B cell (primary cell): ENCODE measurements at regions of chr5 and their contacts with region 1.

Region 1: DNA sequence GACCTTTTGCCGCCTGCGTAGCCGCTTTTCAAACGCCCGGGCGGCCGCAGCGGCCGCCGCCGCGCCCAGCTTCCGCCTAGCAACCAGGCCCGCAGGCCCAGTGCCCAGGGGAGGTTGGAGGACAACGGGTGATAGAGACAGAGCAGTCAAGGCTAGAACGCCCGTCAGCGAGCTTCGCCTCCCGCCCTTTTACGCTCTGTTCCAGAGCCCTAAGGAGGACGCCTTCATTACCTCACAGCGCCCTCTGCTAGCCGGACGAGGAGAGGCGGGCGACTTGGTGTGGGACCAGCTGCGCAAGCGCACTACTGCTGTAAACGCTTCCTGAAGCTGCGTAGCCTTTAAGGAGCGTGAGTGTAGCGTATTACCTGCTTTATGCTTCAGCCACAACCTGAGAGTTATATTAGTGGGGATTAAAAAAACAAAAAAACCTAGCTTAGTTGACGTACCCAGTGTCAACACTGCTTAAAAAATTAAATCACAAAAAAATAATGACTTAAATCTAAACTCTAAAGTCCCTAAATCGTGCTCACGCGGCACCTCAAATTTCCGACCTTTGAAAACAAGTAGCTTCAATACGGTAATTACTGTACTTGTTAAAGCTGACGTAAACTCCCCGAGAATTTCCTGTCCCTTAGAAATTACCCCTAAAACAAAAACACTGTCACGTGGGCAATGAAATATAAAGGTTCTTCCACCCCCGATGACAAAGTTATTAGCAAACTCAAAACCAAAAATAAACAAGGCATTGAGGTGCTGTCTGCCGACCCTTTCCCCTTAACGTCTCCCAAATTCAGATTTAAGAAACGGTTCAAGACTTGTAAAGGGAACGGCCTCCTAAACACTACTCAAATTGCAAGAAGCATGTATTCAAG is at the start of gene CEP120:
- DNase-seq: peak; percentile 99
- ATAC-seq: peak; percentile 97
- H3K4me3 ChIP-seq: peak within 1 kb of the TSS; percentile 51 to 90 (median 89)
- H3K4me3 Mint-ChIP-seq: no peak within 1 kb of the TSS
- H3K27ac ChIP-seq: peak within 1 kb of the TSS; percentile 96 to 99
- H3K27ac Mint-ChIP-seq: no peak within 1 kb of the TSS
- H3K4me1 ChIP-seq: peaks cover 32 to 34% of the 10 kb centered on the region in 2 donors
- H3K4me1 Mint-ChIP-seq: peaks cover 22% of the 10 kb centered on the region
- H3K27me3 ChIP-seq: no peaks in the 10 kb centered on the region
- H3K27me3 Mint-ChIP-seq: no peaks in the 10 kb centered on the region
- CTCF ChIP-seq: peak; percentile 87
- total RNA-seq, gene CEP120: 89.7 and 97.9 TPM in 2 replicates

Region 2: DNA sequence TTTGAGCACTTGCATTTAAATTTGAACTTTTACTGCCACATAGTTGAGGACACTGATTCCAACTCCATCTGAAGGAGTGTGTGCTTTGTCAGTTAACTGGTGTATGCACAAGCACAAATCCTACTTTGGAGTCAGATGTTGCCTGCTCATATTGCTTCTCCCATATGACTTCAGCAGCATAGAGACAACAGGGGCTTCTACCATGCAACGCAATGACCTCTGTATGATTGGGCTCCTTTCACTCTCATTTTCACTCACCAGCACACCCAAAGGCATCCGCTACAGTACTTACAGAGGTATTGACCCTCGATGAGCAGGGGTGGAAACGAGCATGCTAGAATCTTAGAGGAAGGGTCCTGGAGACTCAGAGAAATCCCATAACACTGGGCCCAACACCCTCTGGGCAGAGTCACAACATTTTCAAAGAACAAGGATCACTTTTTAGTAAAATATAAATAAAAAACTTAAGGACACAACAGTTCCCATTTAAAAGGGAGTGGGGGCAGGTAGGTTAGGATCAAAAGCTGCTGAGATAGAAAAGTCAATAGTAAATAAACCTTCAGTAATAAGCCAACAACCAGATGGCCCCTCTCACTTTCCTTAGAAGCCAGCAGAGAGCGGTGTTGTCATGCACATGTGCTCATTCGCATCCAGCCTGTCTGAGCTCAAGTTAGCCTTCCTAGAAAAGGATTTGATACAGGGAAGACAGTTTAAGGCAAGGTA is 907.6 kb before region 1 on chr5:
- CTCF ChIA-PET with region 1: interaction called, 6 read pairs
- POLR2A ChIA-PET with region 1: no interaction called
- intact Hi-C with region 1: loop called (anchors 2 kb)
- DNase-seq: peak; percentile 77
- ATAC-seq: peak; percentile 73
- H3K4me3 ChIP-seq: no peak overlapping the region
- H3K4me3 Mint-ChIP-seq: no peak overlapping the region
- H3K27ac ChIP-seq: no peak overlapping the region
- H3K27ac Mint-ChIP-seq: no peak overlapping the region
- H3K4me1 ChIP-seq: peaks cover 0 to 3% of the 10 kb centered on the region in 2 donors
- H3K4me1 Mint-ChIP-seq: peaks cover 4% of the 10 kb centered on the region
- H3K27me3 ChIP-seq: peaks cover 0 to 4% (median 0%) of the 10 kb centered on the region in 4 experiments
- H3K27me3 Mint-ChIP-seq: peaks cover 4% of the 10 kb centered on the region
- CTCF ChIP-seq: peak; percentile 89

Region 3: DNA sequence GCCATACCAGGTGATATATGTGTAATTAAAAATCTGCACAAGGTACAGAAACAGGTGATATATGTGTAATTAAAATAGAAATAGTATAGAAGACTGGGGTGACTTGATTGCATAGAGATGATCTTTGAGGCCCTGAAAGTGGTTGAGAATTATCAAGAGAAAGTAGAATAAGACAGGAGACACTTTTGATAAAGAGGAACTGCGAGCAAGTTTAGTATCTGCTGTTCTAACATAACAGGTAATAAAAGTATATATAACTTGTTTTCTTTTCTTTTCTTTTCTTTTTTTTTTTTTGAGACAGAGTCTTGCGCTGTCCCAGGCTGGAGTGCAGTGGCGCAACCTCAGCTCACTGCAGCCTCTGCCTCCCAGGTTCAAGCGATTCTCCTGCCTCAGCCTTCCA is 643.2 kb before region 1 on chr5:
- CTCF ChIA-PET with region 1: interaction called, 4 read pairs
- POLR2A ChIA-PET with region 1: no interaction called
- intact Hi-C with region 1: loop called (anchors 1 kb)
- DNase-seq: peak; percentile 42
- ATAC-seq: peak; percentile 35
- H3K4me3 ChIP-seq: peak overlapping the region in 4 of 5 experiments; percentile 25 to 95 (median 34)
- H3K4me3 Mint-ChIP-seq: peak overlapping the region; percentile 74
- H3K27ac ChIP-seq: peak overlapping the region; percentile 57 to 100
- H3K27ac Mint-ChIP-seq: peak overlapping the region; percentile 82
- H3K4me1 ChIP-seq: peaks cover 44 to 58% of the 10 kb centered on the region in 2 donors
- H3K4me1 Mint-ChIP-seq: peaks cover 63% of the 10 kb centered on the region
- H3K27me3 ChIP-seq: no peaks in the 10 kb centered on the region
- H3K27me3 Mint-ChIP-seq: no peaks in the 10 kb centered on the region
- CTCF ChIP-seq: no peak

Region 4: GRCh38 chr5:122885891-122886290 is 537.6 kb before region 1 on chr5:
- CTCF ChIA-PET with region 1: no interaction called
- POLR2A ChIA-PET with region 1: no interaction called
- intact Hi-C with region 1: no loop called
- DNase-seq: no peak
- ATAC-seq: no peak
- H3K4me3 ChIP-seq: no peak overlapping the region
- H3K4me3 Mint-ChIP-seq: no peak overlapping the region
- H3K27ac ChIP-seq: no peak overlapping the region
- H3K27ac Mint-ChIP-seq: no peak overlapping the region
- H3K4me1 ChIP-seq: no peaks in the 10 kb centered on the region
- H3K4me1 Mint-ChIP-seq: no peaks in the 10 kb centered on the region
- H3K27me3 ChIP-seq: no peaks in the 10 kb centered on the region
- H3K27me3 Mint-ChIP-seq: no peaks in the 10 kb centered on the region
- CTCF ChIP-seq: no peak

Region 5: DNA sequence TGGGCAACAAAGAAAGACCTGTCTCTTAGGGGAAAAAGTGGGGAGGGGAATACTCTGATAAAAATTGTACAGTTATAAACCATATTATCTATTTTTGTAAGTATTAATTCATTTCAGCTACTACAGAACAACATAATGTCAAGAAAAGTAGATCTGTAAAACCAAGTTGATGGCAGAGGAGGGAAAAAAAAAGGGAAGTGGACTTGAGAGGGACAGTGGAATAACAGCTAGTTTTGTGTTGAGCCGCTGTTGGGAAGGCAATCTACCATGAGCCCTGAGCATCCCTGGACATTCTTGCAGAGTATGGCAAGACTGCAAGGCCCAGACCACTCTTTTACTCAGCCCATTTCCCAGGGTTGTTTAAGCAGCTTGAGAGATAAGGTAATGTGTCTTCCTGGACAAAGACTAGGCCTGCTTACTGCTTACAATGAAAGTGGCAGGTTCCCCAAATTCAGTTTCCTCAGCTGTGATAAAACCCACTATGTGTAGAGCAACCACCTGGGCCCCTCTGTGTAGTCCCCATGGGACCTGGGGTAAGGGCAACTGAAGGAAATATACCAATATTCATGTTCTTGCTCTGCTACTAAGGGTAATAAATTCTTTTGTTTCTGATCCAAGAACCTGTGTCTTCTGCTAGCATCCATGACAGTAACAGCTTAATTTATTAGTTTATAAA is 25.3 kb before region 1 on chr5:
- CTCF ChIA-PET with region 1: interaction called, 11 read pairs
- POLR2A ChIA-PET with region 1: interaction called, 12 read pairs
- intact Hi-C with region 1: loop called (anchors 1 kb)
- DNase-seq: peak; percentile 84
- ATAC-seq: peak; percentile 99
- H3K4me3 ChIP-seq: no peak overlapping the region
- H3K4me3 Mint-ChIP-seq: peak overlapping the region; percentile 16
- H3K27ac ChIP-seq: peak overlapping the region; percentile 73
- H3K27ac Mint-ChIP-seq: peak overlapping the region; percentile 91
- H3K4me1 ChIP-seq: peaks cover 18 to 27% of the 10 kb centered on the region in 2 donors
- H3K4me1 Mint-ChIP-seq: peaks cover 30% of the 10 kb centered on the region
- H3K27me3 ChIP-seq: no peaks in the 10 kb centered on the region
- H3K27me3 Mint-ChIP-seq: no peaks in the 10 kb centered on the region
- CTCF ChIP-seq: no peak

Region 6: GRCh38 chr5:123511648-123512605 is 88.4 kb after region 1 on chr5 and contains the start of gene CSNK1G3:
- CTCF ChIA-PET with region 1: interaction called, 37 read pairs
- POLR2A ChIA-PET with region 1: interaction called, 40 read pairs
- intact Hi-C with region 1: loop called (anchors 1 kb)
- DNase-seq: peak; percentile 95
- ATAC-seq: peak; percentile 89
- H3K4me3 ChIP-seq: peak within 1 kb of the TSS; percentile 86 to 92 (median 89)
- H3K4me3 Mint-ChIP-seq: peak within 1 kb of the TSS; percentile 100
- H3K27ac ChIP-seq: peak within 1 kb of the TSS; percentile 89 to 90
- H3K27ac Mint-ChIP-seq: peak within 1 kb of the TSS; percentile 99
- H3K4me1 ChIP-seq: peaks cover 33 to 39% of the 10 kb centered on the region in 2 donors
- H3K4me1 Mint-ChIP-seq: peaks cover 41% of the 10 kb centered on the region
- H3K27me3 ChIP-seq: no peaks in the 10 kb centered on the region
- H3K27me3 Mint-ChIP-seq: peaks cover 3% of the 10 kb centered on the region
- CTCF ChIP-seq: no peak
- total RNA-seq, gene CSNK1G3: 140 and 148 TPM in 2 replicates

Region 7: DNA sequence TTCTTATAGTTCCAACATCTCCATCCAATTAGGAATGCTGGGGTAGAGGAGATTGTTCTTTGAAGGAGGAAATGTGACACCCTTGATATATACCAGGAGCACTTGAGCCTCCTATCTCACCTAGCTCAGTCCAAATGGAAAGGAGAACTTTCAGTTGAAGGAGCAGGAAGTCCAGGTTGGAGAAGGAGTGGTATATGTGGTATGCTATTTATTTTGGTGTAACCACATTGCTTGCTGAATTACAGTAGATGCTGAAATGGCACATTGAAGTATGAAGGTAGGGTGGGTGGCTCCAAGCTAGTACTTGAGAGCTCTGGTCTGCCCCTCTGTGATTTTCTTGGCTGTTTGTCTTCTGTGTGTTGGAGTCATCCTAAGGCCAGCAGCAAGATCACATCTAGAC is 94.6 kb after region 1 on chr5:
- CTCF ChIA-PET with region 1: interaction called, 37 read pairs
- POLR2A ChIA-PET with region 1: interaction called, 40 read pairs
- intact Hi-C with region 1: no loop called
- DNase-seq: peak; percentile 39
- ATAC-seq: peak; percentile 24
- H3K4me3 ChIP-seq: peak overlapping the region in 1 of 5 experiments; percentile 6
- H3K4me3 Mint-ChIP-seq: peak overlapping the region; percentile 62
- H3K27ac ChIP-seq: peak overlapping the region; percentile 74 to 80
- H3K27ac Mint-ChIP-seq: peak overlapping the region; percentile 80
- H3K4me1 ChIP-seq: peaks cover 65 to 88% of the 10 kb centered on the region in 2 donors
- H3K4me1 Mint-ChIP-seq: peaks cover 80% of the 10 kb centered on the region
- H3K27me3 ChIP-seq: no peaks in the 10 kb centered on the region
- H3K27me3 Mint-ChIP-seq: no peaks in the 10 kb centered on the region
- CTCF ChIP-seq: no peak

Region 8: GRCh38 chr5:123545506-123545905 is 122.0 kb after region 1 on chr5:
- CTCF ChIA-PET with region 1: interaction called, 26 read pairs
- POLR2A ChIA-PET with region 1: interaction called, 13 read pairs
- intact Hi-C with region 1: loop called (anchors 1 kb)
- DNase-seq: peak; percentile 43
- ATAC-seq: no peak
- H3K4me3 ChIP-seq: no peak overlapping the region
- H3K4me3 Mint-ChIP-seq: no peak overlapping the region
- H3K27ac ChIP-seq: no peak overlapping the region
- H3K27ac Mint-ChIP-seq: no peak overlapping the region
- H3K4me1 ChIP-seq: peaks cover 43 to 66% of the 10 kb centered on the region in 2 donors
- H3K4me1 Mint-ChIP-seq: peaks cover 75% of the 10 kb centered on the region
- H3K27me3 ChIP-seq: no peaks in the 10 kb centered on the region
- H3K27me3 Mint-ChIP-seq: no peaks in the 10 kb centered on the region
- CTCF ChIP-seq: peak; percentile 52